Transverse colon (tissue), 4 donors: ENCODE measurements at regions of chr2 and their contacts with region 1.

Region 1: DNA sequence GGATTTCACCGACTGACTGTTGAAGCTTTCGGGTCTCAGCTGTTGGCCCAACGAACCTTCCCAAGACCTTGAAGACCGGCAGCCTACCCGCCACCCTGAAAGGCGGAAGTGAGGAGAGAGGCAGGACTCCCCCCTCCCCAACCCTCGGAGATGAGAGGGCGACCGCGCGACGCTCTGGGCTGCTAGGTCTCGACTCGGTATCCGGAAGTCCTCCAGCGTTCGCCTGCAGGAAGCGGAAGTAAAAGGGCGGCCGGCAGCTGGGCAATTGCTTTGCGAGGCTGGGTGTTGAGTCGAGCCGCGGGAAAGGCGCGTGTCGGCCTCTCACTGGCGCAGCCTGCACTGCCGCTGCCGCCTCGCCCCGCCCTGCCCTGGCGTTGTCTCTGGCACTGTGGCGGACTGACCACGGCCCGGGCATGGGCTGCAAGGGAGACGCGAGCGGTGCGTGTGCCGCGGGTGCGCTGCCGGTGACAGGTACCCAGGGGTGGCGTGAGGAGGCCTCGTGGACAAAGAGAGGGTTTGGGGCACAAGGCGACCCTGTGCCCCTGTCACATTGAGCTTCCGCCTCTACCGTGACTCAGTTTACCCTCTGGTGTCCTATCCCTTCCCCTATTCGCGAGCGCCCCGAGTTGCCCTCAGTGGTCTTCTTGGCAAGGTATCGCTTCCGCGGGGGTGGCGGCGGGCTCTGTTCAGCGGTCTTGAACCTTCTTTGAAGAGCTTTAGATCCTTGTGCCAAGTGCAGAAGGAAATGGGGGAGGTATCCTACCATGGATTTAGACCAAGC is at the start of gene UGGT1:
- DNase-seq: peak; percentile 96
- H3K4me3 ChIP-seq: peak within 1 kb of the TSS; percentile 63 to 99 (median 78)
- H3K27ac ChIP-seq: peak within 1 kb of the TSS; percentile 86 to 94 (median 90)
- H3K4me1 ChIP-seq: peaks cover 9 to 25% (median 12%) of the 10 kb centered on the region in 4 donors
- H3K27me3 ChIP-seq: no peaks in the 10 kb centered on the region
- CTCF ChIP-seq: no peak
- EP300 ChIP-seq: no peak
- POLR2A ChIP-seq: peak; percentile 97
- total RNA-seq, gene UGGT1: 38.8 to 57.2 (median 52.2) TPM

Region 2: GRCh38 chr2:127874378-127875271 is 216.5 kb before region 1 on chr2:
- in situ Hi-C with region 1: no loop called
- intact Hi-C with region 1: no loop called
- DNase-seq: no peak
- H3K4me3 ChIP-seq: no peak overlapping the region
- H3K27ac ChIP-seq: no peak overlapping the region
- H3K4me1 ChIP-seq: peaks cover 0 to 9% (median 2%) of the 10 kb centered on the region in 4 donors
- H3K27me3 ChIP-seq: no peaks in the 10 kb centered on the region
- CTCF ChIP-seq: no peak
- EP300 ChIP-seq: no peak
- POLR2A ChIP-seq: no peak

Region 3: DNA sequence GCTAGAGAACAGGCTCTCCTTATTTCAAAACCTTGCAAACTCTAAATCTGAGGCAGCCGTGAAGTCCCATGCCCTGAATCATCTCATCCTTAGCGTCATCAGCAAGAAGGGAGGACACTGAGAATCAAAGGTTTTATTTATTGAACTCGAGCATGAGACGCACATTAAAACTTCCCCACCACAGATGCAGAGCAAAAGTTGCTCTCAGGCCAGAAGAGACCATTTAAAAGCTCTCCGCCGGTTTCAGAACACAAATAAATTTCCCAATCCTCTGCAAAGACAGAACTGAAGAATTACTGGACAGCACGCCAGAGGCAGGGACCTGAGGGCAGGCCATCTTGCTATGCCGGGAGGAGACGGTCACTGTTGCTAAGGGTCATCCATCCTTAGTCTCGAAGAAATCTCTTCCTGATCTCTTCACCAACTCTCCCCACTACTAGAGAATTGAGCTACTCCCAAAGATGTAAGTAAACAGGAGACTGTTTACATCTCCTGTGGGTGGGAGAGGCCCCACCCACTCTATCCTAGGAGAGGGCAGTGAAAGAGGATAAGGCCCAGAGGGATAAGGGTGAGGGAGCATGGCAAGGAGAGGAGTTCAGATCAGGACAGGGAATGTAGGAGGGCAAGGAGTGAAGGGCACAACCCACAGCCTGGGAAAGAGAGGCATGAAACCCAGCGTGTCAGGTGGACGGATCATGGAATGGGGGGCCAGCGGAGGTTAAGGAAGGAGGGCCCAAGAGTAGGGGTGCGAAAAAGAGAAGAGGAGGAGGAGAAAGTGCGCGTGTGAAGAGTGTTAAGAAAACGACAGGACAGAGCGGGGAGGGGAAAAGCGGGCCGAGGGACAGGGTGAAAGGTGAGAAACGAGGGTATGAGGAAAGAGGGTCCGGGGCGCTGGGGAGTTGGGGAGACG is 206.4 kb before region 1 on chr2:
- in situ Hi-C with region 1: loop called in 1 of 4 experiments (anchors 10 kb)
- intact Hi-C with region 1: no loop called
- DNase-seq: peak; percentile 14
- H3K4me3 ChIP-seq: peak overlapping the region; percentile 45 to 63 (median 60)
- H3K27ac ChIP-seq: peak overlapping the region; percentile 90 to 95 (median 92)
- H3K4me1 ChIP-seq: peaks cover 19 to 46% (median 24%) of the 10 kb centered on the region in 4 donors
- H3K27me3 ChIP-seq: no peaks in the 10 kb centered on the region
- CTCF ChIP-seq: peak in 1 of 5 experiments; percentile 9
- EP300 ChIP-seq: no peak
- POLR2A ChIP-seq: no peak

Region 4: DNA sequence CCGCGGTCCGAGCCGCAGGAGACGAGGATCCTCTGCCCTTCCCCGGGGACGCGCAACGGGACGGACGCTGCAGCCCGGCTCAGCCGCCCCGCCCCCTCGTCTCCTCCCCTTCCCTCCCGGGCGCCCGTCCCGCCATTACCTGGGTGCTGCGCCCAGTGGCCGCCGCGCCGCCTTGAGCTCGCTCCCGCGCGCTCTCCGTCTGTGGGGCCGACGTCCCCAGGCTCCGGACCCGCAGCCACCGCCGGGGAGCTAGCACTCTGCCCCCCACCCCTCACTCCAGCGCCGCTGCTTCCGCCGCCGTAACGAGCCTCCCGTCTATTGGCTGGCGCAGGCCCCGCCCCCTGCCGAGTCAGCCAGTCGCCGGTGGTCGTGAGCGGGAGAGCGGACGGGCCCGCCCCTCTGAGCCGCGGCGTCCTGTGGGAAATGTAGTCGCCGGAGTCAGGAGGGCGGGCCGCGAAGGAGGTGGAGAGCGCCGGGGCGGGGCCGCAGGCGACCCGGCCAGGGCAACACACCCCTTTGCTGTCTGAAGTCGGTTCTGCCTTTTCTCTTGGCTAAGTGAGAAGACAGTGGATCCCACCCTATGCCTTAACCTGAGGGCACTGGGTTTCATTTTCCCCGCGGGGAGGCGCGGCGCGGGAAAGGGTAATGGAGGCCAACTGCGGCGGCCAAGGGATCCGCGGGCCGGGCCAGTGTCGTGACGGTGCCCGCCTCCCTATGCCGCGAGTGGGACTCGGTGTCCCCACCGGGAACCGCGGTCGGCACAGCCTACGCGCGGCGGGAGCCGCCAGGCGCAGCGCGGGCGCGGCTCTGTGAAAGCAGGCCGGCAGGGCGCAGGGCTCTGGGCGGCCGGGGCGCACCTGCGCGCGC is 63.1 kb before region 1 on chr2 and contains the start of gene SAP130:
- in situ Hi-C with region 1: loop called in 1 of 4 experiments (anchors 10 kb)
- intact Hi-C with region 1: loop called (anchors 5 kb)
- DNase-seq: peak; percentile 99
- H3K4me3 ChIP-seq: peak within 1 kb of the TSS; percentile 83 to 100 (median 90)
- H3K27ac ChIP-seq: peak within 1 kb of the TSS; percentile 95 to 99 (median 98)
- H3K4me1 ChIP-seq: peaks cover 5 to 19% (median 16%) of the 10 kb centered on the region in 4 donors
- H3K27me3 ChIP-seq: no peaks in the 10 kb centered on the region
- CTCF ChIP-seq: peak in 2 of 5 experiments; percentile 9 to 13
- EP300 ChIP-seq: no peak
- POLR2A ChIP-seq: peak; percentile 80
- total RNA-seq, gene SAP130: 2.6 to 23.9 (median 13.0) TPM

Region 5: DNA sequence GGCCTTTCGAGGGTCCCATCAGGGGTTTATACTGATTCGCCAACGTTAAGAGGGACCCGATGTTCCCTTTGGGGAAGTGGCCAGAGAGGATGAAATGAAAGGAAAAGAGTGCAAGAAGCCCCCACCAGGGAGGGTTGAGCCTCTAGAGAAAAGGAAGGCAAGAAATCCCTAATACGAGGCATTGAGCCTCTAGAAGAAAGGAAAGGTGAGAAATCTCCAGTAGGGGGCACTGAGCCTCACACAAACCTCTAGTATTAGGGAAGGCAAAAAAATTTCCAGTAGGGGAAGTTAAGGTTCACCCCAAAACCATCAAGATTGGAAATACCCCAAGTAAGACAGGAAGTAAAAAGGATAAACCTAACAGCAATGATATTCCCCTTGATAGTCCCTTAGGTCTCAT is 53.5 kb before region 1 on chr2:
- in situ Hi-C with region 1: loop called in 1 of 4 experiments (anchors 10 kb)
- intact Hi-C with region 1: no loop called
- DNase-seq: no peak
- H3K4me3 ChIP-seq: no peak overlapping the region
- H3K27ac ChIP-seq: no peak overlapping the region
- H3K4me1 ChIP-seq: no peaks in the 10 kb centered on the region
- H3K27me3 ChIP-seq: no peaks in the 10 kb centered on the region
- CTCF ChIP-seq: no peak
- EP300 ChIP-seq: no peak
- POLR2A ChIP-seq: no peak